Activated B cell treated with CpG ODN at 0.5 μM for 24 hours (primary cell): ENCODE measurements at regions of chr6 and their contacts with region 1.

Region 1: DNA sequence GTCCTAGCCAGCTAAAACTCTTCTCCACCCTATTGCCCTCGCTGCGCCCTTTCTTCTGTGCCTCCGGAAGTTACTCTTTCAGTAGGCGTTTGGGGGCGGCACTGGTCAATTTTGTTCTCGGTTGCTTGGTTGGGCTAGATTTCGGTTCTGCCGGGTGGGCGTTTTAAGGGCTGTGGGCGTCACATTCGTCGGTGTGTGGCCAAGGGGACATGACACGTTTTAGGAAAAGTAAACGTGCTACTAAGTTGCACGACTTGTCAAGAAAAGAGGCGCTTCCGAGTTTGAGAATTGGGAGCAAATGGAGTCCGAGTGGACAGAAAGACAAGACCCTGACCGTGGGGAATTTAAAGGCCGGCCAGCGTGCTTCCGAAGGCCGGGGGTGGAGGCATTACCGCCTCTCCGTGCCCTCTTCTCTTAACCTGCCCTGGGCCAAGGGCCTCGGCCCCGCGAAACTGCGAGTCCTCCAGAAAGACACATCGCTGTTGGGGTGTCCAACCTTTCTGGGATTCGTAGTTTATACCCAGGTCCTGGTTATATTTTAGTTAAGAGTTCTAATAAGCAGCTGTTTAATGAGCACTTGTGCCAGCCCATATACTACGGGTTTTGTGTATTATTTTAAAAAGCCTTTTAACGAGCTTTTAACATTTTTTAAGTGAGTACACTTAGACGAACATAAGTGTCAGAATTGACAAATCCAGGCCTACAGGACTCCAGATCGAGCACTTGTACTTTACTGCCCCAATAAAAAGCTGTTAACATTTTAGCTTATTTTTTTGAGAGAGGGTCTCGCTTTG is 661 bp upstream of the BAG6 start:
- DNase-seq: no peak
- ATAC-seq: peak; percentile 73
- H3K4me3 Mint-ChIP-seq: peak overlapping the region; percentile 94
- H3K27ac Mint-ChIP-seq: peak overlapping the region; percentile 100
- H3K4me1 Mint-ChIP-seq: peaks cover 55% of the 10 kb centered on the region
- H3K27me3 Mint-ChIP-seq: no peaks in the 10 kb centered on the region
- CTCF ChIP-seq: no peak

Region 2: GRCh38 chr6:31559958-31560696 is 93.0 kb before region 1 on chr6:
- CTCF ChIA-PET with region 1: no interaction called
- POLR2A ChIA-PET with region 1: interaction called, 24 read pairs
- intact Hi-C with region 1: no loop called
- DNase-seq: peak; percentile 52
- ATAC-seq: peak; percentile 67
- H3K4me3 Mint-ChIP-seq: peak overlapping the region; percentile 83
- H3K27ac Mint-ChIP-seq: peak overlapping the region; percentile 94
- H3K4me1 Mint-ChIP-seq: peaks cover 90% of the 10 kb centered on the region
- H3K27me3 Mint-ChIP-seq: no peaks in the 10 kb centered on the region
- CTCF ChIP-seq: no peak

Region 3: DNA sequence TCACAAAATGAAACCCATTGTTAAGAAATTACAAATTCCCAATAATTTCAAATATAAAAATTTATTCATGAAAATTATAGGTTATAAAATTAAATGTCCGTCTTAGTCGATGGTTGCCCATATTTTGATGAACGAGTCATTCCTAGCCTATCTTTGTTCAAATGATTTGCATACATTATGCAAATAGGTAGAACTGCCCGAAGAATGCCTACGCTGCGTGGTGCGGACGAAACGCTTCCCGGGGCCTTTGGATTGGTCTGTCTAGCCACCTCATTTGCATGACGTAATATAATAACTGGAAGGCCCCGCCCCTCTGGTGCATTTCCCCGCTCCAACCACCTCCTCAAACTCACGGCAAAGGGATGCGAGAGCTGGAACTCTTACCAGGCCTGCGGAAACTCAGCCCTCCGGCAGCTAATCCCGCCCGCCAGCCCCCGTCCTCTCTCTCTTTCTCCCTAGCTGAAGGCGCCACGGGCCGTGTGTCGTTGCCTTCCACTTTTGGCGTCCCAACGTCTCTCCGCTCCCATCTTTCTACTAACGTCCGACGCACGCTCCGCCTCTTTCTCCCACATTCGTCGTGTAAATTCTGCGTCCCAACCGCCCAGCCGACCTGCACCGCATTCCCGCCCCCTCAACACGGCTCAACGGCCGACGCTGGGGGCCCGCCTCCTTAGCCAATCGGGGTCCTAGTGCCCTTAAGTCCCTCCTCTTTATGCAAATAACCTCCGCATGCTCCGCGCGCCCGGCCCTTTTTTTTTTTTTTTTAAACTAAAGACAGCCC is 33.1 kb before region 1 on chr6:
- CTCF ChIA-PET with region 1: no interaction called
- POLR2A ChIA-PET with region 1: interaction called, 34 read pairs
- intact Hi-C with region 1: loop called (anchors 1 kb)
- DNase-seq: peak; percentile 87
- ATAC-seq: peak; percentile 84
- H3K4me3 Mint-ChIP-seq: peak overlapping the region; percentile 86
- H3K27ac Mint-ChIP-seq: peak overlapping the region; percentile 94
- H3K4me1 Mint-ChIP-seq: peaks cover 46% of the 10 kb centered on the region
- H3K27me3 Mint-ChIP-seq: no peaks in the 10 kb centered on the region
- CTCF ChIP-seq: no peak

Region 4: GRCh38 chr6:31687860-31688693 is 35.0 kb after region 1 on chr6:
- CTCF ChIA-PET with region 1: no interaction called
- POLR2A ChIA-PET with region 1: no interaction called
- intact Hi-C with region 1: no loop called
- DNase-seq: no peak
- ATAC-seq: no peak
- H3K4me3 Mint-ChIP-seq: no peak overlapping the region
- H3K27ac Mint-ChIP-seq: no peak overlapping the region
- H3K4me1 Mint-ChIP-seq: peaks cover 19% of the 10 kb centered on the region
- H3K27me3 Mint-ChIP-seq: no peaks in the 10 kb centered on the region
- CTCF ChIP-seq: no peak

Region 5: GRCh38 chr6:31702819-31703522 is 49.8 kb after region 1 on chr6 and contains the start of gene ABHD16A:
- CTCF ChIA-PET with region 1: interaction called, 5 read pairs
- POLR2A ChIA-PET with region 1: interaction called, 15 read pairs
- intact Hi-C with region 1: loop called (anchors 1 kb)
- DNase-seq: peak; percentile 94
- ATAC-seq: peak; percentile 93
- H3K4me3 Mint-ChIP-seq: peak within 1 kb of the TSS; percentile 99
- H3K27ac Mint-ChIP-seq: peak within 1 kb of the TSS; percentile 89
- H3K4me1 Mint-ChIP-seq: peaks cover 28% of the 10 kb centered on the region
- H3K27me3 Mint-ChIP-seq: no peaks in the 10 kb centered on the region
- CTCF ChIP-seq: no peak
- total RNA-seq, gene ABHD16A: 49.3 and 59.1 TPM in 2 replicates

Region 6: DNA sequence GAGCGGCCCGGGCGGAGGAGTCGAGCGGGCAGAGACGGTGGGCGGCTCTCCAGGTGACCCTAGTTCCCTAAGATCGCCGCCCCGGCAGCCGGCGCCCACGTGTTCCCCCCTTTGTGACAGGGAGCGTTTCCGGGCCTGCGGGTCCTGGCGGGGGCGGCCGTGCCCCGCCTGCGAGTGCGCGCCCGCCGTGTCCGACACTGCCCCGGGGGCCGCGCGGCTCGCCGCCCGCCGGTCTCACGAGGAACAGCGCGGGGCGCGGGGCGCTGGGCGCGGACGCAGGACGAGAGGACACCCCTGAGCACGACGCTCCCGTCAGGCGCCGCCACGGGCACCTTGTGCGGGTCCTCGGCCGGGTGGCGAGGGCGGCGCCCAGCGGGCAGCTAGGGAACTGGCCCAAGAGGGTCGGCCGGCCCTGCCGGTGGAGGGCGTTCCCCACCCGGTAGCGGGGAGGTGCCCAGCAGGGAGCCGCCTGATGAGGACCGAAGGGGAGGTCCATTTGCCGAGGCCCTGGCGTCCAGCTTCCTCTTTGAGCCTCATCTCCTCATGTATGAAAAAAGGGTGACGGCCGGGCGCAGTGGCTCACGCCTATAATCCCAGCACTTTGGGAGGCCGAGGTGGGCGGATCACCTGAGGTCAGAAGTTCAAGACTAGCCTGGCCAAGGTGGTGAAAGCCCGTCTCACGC is 142.6 kb after region 1 on chr6 and contains the start of gene VARS1:
- CTCF ChIA-PET with region 1: no interaction called
- POLR2A ChIA-PET with region 1: interaction called, 6 read pairs
- intact Hi-C with region 1: loop called (anchors 1 kb)
- DNase-seq: peak; percentile 89
- ATAC-seq: peak; percentile 89
- H3K4me3 Mint-ChIP-seq: peak within 1 kb of the TSS; percentile 98
- H3K27ac Mint-ChIP-seq: peak within 1 kb of the TSS; percentile 98
- H3K4me1 Mint-ChIP-seq: peaks cover 65% of the 10 kb centered on the region
- H3K27me3 Mint-ChIP-seq: no peaks in the 10 kb centered on the region
- CTCF ChIP-seq: no peak
- total RNA-seq, gene VARS1: 136 and 140 TPM in 2 replicates

Region 7: DNA sequence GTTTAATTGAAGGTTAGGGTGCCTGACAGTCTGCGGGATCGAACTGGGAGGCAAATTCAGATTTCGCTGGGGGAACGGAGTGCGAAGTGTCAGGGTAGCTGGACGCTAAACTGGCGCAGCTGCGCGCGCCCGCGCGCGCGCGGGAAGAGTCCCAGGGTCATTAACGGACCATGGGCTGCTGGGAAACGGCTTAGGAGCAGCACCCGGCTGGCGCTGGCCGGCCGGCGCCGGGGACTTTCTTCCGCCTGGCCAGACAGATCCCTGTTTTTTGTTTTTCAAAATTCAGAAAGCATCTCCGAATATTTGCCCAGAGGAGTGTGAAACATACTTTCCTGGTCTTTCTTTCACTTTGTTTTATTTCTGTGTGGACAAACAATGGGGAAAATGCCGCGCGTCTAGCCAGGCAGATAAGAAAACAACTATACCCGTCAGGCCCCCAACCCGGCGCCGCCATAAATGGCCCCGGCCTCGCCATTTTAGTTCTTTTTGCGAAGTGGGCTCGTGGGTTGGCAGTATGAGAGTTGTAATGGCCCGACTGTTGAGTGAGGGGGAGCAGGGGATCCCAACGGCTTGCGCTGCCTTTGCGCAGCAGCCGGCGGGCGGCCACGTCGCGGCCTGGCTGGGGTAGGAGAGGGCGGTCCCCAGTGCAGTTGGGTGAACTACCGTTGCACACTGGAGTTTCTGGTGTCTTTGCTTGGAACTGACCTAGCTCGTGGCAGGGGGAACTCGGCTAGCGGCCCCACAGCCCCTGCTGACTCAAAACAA is 181.5 kb after region 1 on chr6:
- CTCF ChIA-PET with region 1: interaction called, 3 read pairs
- POLR2A ChIA-PET with region 1: interaction called, 13 read pairs
- intact Hi-C with region 1: loop called (anchors 1 kb)
- DNase-seq: peak; percentile 75
- ATAC-seq: peak; percentile 62
- H3K4me3 Mint-ChIP-seq: peak overlapping the region; percentile 99
- H3K27ac Mint-ChIP-seq: peak overlapping the region; percentile 98
- H3K4me1 Mint-ChIP-seq: peaks cover 71% of the 10 kb centered on the region
- H3K27me3 Mint-ChIP-seq: no peaks in the 10 kb centered on the region
- CTCF ChIP-seq: no peak